Heart right ventricle (tissue), 16 donors: ENCODE measurements at regions of chr4 and their contacts with region 1.

Region 1: DNA sequence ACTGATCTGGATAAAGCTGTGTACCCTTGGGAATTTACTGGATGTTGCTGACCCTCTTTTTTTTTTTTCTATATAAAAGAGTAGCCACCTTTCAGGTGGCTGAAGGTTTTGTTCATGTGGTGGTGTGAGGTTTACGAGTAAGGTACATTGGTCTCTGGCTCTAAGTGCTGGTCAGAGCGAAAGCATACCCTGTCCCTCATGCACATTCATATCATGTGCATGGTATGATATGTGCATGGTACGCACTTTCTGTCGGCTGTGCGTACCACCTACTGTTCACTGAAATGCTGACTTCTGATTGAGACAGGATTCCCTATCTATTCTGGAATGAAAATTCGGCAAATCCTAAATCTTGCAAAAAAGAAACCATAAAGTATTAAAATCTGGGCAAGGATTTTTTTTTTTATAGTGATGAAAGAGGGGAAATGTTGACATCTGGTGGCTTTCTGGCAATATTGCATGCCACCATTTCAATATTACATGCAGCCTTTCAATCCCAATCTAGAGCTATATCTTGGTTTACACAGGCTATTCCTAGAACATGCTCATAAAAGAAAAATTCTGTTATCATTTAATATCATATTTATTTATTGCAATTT is 32.8 kb downstream of the FAM149A start:
- DNase-seq: no peak
- ATAC-seq: peak in 1 of 8 donors; percentile 39
- H3K4me3 ChIP-seq: peak overlapping the region in 3 of 10 donors; percentile 6 to 27 (median 7)
- H3K27ac ChIP-seq: no peak overlapping the region
- H3K4me1 ChIP-seq: peaks cover 0 to 2% (median 0%) of the 10 kb centered on the region in 9 donors
- H3K27me3 ChIP-seq: peaks cover 0 to under 1% (median 0%) of the 10 kb centered on the region in 7 donors
- CTCF ChIP-seq: peak; percentile 48 to 81 (median 68)

Region 2: DNA sequence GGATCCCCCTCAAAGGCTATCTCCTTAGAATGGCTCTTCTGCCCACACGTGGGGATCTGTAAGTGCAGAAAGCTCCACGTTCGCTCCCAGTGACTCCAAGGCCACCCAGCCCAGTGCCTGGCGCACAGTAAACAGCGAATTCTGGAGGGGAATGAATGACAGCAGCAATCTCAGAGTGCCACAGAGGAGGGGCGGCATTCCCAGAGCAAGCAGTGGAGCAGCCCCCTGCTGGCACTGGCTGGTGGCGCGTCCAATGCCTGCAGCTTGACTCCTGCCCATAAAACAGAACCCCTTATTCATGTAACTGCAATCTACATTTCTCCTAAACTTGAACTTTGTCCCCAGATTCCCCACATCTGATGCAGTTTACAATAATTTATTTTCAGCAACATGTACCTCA is 1125.9 kb before region 1 on chr4:
- intact Hi-C with region 1: loop called in 1 of 10 experiments (anchors 5 kb)
- DNase-seq: no peak
- ATAC-seq: no peak
- H3K4me3 ChIP-seq: no peak overlapping the region
- H3K27ac ChIP-seq: no peak overlapping the region
- H3K4me1 ChIP-seq: peaks cover 0 to 6% (median 3%) of the 10 kb centered on the region in 9 donors
- H3K27me3 ChIP-seq: peaks cover 9 to 92% (median 76%) of the 10 kb centered on the region in 7 donors
- CTCF ChIP-seq: peak in 7 of 9 donors; percentile 16 to 39 (median 25)

Region 3: GRCh38 chr4:186067757-186068385 is 69.4 kb before region 1 on chr4:
- intact Hi-C with region 1: loop called (anchors 2 to 10 kb)
- DNase-seq: peak; percentile 27 to 60
- ATAC-seq: peak; percentile 87 to 94 (median 90)
- H3K4me3 ChIP-seq: peak overlapping the region; percentile 36 to 68 (median 55)
- H3K27ac ChIP-seq: peak overlapping the region in 6 of 10 donors; percentile 17 to 72 (median 66)
- H3K4me1 ChIP-seq: peaks cover 0 to 21% (median 12%) of the 10 kb centered on the region in 9 donors
- H3K27me3 ChIP-seq: no peaks in the 10 kb centered on the region
- CTCF ChIP-seq: peak; percentile 12 to 70 (median 58)

Region 4: GRCh38 chr4:186074189-186074588 is 63.1 kb before region 1 on chr4:
- intact Hi-C with region 1: loop called (anchors 2 to 10 kb)
- DNase-seq: no peak
- ATAC-seq: peak in 2 of 8 donors; percentile 30 to 34
- H3K4me3 ChIP-seq: no peak overlapping the region
- H3K27ac ChIP-seq: no peak overlapping the region
- H3K4me1 ChIP-seq: peaks cover 0 to 12% (median 4%) of the 10 kb centered on the region in 9 donors
- H3K27me3 ChIP-seq: no peaks in the 10 kb centered on the region
- CTCF ChIP-seq: no peak

Region 5: DNA sequence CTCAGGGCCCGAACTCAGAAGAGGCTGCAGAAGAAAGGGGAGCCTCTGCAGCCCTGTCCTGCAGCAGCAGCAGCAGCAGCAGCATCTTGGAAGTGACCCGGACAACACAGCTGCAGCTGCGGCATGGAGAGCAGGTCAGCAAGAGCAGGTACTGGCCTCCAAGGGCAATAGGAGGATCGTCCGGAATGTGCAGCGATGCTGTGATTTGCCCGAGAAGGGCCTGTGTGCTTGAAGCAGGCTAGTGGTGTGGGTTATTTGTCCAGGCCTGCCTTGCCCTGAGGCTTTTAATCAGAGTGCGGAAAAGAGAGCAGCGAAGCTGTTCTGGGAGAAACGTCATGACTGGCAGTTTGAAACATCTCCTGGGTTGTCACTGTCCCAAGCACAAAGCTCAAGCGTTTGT is 254.7 kb after region 1 on chr4:
- intact Hi-C with region 1: no loop called
- DNase-seq: no peak
- ATAC-seq: no peak
- H3K4me3 ChIP-seq: no peak overlapping the region
- H3K27ac ChIP-seq: no peak overlapping the region
- H3K4me1 ChIP-seq: no peaks in the 10 kb centered on the region
- H3K27me3 ChIP-seq: no peaks in the 10 kb centered on the region
- CTCF ChIP-seq: no peak